ENCODE measurements at regions of chr14 and their contacts with region 1.

Region 1: GRCh38 chr14:35046048-35046741 is at the start of gene FAM177A1:
- DNase-seq: peak; percentile 99
- H3K4me3 Mint-ChIP-seq: peak within 1 kb of the TSS; percentile 89
- H3K27ac Mint-ChIP-seq: peak within 1 kb of the TSS; percentile 98
- H3K4me1 Mint-ChIP-seq: peaks cover 25% of the 10 kb centered on the region
- H3K27me3 Mint-ChIP-seq: no peaks in the 10 kb centered on the region
- total RNA-seq, gene FAM177A1: 55.0 to 58.5 TPM

Region 2: DNA sequence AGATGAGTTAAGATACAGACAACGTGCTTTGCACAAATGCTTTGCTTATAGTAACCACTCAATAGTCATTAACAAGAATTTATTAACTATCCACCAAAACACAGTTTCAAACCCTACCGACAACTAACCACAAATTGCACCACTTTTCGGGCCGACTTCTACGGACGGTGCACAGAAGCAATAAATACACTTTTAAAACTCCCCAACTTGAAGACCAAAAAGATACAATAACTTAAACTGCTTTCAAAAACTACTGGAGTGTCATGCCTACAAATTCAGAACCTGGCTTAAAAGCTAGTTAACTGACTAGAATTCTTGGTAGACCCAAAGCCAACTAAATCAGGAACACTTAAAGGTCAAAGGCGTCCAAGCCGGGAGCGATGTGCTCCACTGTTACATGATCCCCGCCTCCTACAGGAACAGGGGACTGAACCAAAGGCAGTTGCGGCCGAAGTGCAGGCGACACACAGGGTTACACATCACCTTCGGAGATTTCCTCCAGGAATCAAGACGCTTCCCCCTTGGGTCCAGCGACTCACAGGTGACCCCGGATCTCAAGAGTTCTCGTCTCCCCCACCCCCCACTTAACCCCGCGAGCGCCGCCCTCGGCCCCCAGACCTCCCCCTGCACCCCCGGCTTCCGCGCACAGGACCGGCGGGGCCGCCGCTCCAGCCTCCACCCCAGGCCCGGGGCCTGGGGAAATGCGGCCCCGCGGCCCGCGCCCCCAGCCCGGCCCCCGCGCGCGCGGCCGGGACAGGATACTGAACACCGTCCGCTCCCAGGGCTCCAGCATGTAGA is 584.7 kb before region 1 on chr14:
- CTCF ChIA-PET with region 1: no interaction called
- intact Hi-C with region 1: loop called (anchors 5 kb)
- DNase-seq: peak; percentile 41
- H3K4me3 Mint-ChIP-seq: peak overlapping the region; percentile 87
- H3K27ac Mint-ChIP-seq: peak overlapping the region; percentile 65
- H3K4me1 Mint-ChIP-seq: peaks cover 16% of the 10 kb centered on the region
- H3K27me3 Mint-ChIP-seq: no peaks in the 10 kb centered on the region

Region 3: GRCh38 chr14:34629657-34630529 is 416.3 kb before region 1 on chr14 and contains the start of gene SNX6:
- CTCF ChIA-PET with region 1: no interaction called
- intact Hi-C with region 1: loop called (anchors 1 kb)
- DNase-seq: peak; percentile 85
- H3K4me3 Mint-ChIP-seq: peak within 1 kb of the TSS; percentile 93
- H3K27ac Mint-ChIP-seq: peak within 1 kb of the TSS; percentile 89
- H3K4me1 Mint-ChIP-seq: peaks cover 20% of the 10 kb centered on the region
- H3K27me3 Mint-ChIP-seq: no peaks in the 10 kb centered on the region
- total RNA-seq, gene SNX6: 73.9 to 74.3 TPM

Region 4: DNA sequence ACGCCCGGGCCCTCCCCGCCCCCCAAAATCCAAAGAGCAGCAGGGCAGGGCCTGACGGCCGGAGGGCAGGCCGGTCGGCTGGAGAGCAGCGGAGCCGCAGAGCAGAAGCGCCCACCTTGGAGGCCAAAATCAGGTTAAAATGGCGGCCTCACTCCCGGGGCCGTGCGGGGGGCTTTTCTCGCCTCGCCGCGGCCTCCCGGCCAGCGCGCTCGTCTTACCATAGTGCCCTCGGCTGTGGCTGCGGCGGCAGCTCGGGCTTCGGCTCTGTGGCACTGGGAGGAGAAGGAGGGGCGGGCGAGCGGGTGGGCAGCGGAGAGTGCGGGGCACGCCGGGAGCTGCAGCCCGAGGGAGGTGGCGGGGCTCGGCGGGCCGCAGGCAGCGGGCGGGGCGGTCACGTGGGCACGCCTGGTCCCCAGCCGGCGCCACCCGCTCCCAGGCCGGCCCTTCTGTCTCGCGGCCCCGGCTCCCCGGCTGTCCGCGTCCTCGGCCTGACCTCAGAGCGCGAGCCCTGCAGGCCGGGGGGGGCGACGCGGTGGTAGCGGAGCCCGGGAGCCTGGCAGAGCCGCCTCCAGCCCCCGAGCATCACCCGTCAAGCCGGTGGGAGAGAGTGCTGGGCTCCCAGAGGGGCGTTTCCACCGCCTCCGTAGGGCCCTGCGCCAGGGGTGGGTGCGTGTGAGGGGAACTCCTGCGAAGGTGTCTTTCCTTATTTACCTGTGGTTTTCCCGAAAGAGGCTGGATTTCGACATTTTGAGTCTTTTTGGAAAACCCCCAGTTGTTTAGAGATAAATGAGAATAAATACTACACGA is 331.7 kb before region 1 on chr14 and contains the start of gene CFL2:
- CTCF ChIA-PET with region 1: no interaction called
- intact Hi-C with region 1: loop called (anchors 5 kb)
- DNase-seq: peak; percentile 75
- H3K4me3 Mint-ChIP-seq: peak within 1 kb of the TSS; percentile 81
- H3K27ac Mint-ChIP-seq: peak within 1 kb of the TSS; percentile 82
- H3K4me1 Mint-ChIP-seq: peaks cover 18% of the 10 kb centered on the region
- H3K27me3 Mint-ChIP-seq: no peaks in the 10 kb centered on the region
- total RNA-seq, gene CFL2: 3.1 to 4.5 TPM

Region 5: GRCh38 chr14:35197015-35197414 is 150.8 kb after region 1 on chr14:
- CTCF ChIA-PET with region 1: no interaction called
- intact Hi-C with region 1: loop called (anchors 1 kb)
- DNase-seq: no peak
- H3K4me3 Mint-ChIP-seq: no peak overlapping the region
- H3K27ac Mint-ChIP-seq: no peak overlapping the region
- H3K4me1 Mint-ChIP-seq: peaks cover 30% of the 10 kb centered on the region
- H3K27me3 Mint-ChIP-seq: no peaks in the 10 kb centered on the region

Region 6: GRCh38 chr14:35292051-35292769 is 246.0 kb after region 1 on chr14 and contains the start of gene PSMA6:
- CTCF ChIA-PET with region 1: no interaction called
- intact Hi-C with region 1: loop called (anchors 2 kb)
- DNase-seq: peak; percentile 99
- H3K4me3 Mint-ChIP-seq: peak within 1 kb of the TSS; percentile 98
- H3K27ac Mint-ChIP-seq: peak within 1 kb of the TSS; percentile 97
- H3K4me1 Mint-ChIP-seq: peaks cover 53% of the 10 kb centered on the region
- H3K27me3 Mint-ChIP-seq: no peaks in the 10 kb centered on the region
- total RNA-seq, gene PSMA6: 433 to 437 TPM

Region 7: DNA sequence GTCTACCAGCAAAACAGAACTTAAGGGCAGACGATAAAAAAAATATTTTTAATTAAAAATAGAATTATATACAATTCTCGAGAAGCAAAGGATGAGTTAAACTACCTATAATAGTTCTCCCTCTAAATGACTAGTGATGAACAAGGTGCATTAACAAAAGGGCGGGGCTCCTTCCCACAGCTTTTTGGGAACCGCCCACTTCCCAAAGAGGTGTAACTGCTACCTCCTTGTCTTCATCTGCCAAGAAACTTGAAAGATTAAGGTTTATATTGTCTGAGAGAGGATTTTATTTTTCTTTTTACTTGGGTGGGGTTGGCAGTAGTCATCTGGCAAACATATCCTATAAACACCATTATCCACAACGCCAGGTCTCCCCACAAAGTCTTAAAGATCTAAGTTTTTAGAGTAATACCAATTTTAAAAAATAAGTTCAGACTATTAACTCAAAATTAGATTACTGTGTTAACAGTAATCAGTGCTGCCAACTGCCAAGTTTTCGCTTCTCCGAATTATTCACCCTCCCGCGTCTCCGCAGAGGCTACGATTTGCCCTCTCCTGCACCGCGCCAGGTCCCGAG is 762.0 kb after region 1 on chr14:
- CTCF ChIA-PET with region 1: no interaction called
- intact Hi-C with region 1: loop called (anchors 5 kb)
- DNase-seq: peak; percentile 61
- H3K4me3 Mint-ChIP-seq: peak overlapping the region; percentile 98
- H3K27ac Mint-ChIP-seq: peak overlapping the region; percentile 86
- H3K4me1 Mint-ChIP-seq: peaks cover 28% of the 10 kb centered on the region
- H3K27me3 Mint-ChIP-seq: no peaks in the 10 kb centered on the region

Measured in activated naive CD4-positive, alpha-beta T cell treated with anti-CD3 and anti-CD28 coated beads for 36 hours (primary cell).